Astrocyte of the cerebellum (primary cell): ENCODE measurements at regions of chr3 and their contacts with region 1.

Region 1: DNA sequence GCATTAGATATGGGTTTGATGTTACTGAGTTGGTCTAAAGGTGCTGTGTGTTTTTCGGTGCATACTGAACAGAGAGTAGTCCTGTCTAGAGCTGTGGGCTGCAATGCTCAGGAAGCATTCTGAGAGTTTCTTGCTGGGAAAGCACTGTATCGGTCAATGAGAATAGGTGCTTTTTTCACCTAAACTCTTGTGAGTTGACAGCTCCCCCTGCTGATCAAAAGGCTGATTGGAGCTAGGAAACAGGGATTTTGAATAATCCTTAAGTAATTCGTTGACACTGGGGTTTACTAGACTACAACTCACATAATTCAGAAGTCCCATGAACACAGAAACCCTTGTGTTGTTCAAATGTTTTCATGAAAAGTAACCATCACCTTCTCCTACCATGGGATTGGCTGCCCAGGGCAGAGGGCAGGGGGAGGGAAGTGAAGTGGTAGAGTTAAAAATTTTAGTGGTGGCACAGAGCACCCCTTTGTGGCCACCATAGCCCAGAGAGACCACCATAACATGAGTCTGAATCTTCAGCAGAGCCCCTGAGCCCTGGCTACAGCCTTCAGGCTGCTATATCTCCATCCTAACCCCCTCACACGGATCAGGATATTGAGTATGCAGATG is 13.0 kb upstream of the MANF start:
- DNase-seq: peak; percentile 73
- H3K4me3 ChIP-seq: no peak overlapping the region
- CTCF ChIP-seq: peak; percentile 79

Region 2: DNA sequence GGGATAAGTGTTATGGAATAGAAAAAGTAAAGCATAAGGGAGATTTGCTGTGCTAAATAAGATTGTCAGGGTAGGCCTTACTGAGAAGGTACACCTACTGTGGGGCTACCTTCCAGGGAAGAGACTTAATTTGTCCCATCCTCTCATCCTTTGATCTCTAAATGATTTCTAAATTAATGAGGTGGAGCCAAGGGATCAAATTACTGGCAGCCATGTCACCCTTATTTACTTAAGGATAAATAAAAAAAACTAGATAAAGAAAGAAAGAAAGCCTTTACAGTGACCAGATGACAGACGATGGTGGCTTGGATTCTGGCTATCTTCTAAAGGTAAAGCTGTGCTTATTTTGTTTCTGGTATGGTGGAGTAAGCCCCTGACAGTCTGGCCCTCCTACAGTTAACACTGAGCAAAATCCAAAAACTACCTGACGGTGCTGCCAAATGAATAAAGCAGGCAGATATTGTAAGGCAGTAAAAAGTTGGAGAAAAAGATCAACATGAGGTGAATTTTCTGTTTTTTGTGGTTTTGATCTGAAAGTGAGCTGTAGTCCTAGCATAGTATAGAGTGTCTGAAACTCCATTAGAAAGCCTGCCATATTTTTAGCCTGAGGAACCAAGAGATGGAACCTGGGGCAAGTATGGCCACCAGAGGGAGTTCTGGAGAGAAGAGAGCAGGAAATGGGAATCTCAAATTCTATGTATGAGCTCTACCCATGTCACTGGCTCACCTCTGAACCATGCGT is 272.1 kb before region 1 on chr3:
- in situ Hi-C with region 1: loop called (anchors 10 kb)
- DNase-seq: peak; percentile 37
- H3K4me3 ChIP-seq: no peak overlapping the region
- CTCF ChIP-seq: peak; percentile 93